OCI-LY7 (cell line): ENCODE measurements at regions of chr11 and their contacts with region 1.

Region 1: DNA sequence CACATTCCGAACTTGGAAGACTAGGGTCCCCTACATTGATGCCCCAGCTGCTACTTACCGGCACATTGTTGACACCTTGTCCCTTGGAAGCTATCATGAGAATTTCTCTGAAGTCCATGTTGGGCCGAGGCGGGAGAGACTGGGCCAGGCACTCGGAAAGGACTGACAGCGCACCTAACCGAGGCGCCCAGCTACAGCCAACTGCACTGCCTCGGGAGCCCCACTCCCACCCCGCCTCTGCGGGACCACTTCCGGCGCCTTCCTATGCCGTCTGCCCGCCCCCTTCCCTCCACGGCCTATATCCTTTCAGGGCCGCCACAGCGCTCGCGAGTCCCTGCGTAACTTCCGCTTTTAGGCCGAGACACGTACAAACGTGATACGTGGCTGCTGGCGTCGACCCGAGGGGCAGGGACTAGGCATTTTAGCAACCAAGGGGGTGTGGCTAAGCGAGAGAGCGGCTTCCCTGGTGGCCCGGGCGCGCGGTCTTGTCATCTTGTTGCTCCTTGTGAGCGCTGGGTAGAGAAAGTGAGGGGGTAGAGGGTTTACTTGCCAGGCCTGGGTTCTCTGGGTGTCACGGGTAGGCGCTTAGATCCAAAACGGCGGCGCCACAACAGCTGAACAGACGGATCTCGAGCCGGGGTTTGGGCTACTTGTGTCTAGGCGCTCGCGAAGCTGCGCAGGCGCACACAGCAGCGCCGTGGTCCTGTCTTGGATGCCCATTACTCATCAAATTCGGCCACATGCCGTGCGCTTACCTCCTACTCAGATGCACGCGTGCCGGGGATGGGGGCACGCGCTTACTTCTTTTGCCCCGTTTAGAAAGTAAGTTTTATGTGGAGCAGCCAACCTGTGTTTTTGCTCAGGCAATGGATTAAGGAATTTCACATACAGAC is at the start of gene SPTY2D1:
- DNase-seq: peak; percentile 100
- H3K4me3 ChIP-seq: peak within 1 kb of the TSS; percentile 90
- H3K27ac ChIP-seq: peak within 1 kb of the TSS; percentile 67
- H3K4me1 ChIP-seq: peaks cover 16% of the 10 kb centered on the region
- CTCF ChIP-seq: no peak
- total RNA-seq, gene SPTY2D1: 15.6 and 15.8 TPM in 2 replicates

Region 2: GRCh38 chr11:18567081-18567480 is 67.3 kb before region 1 on chr11:
- CTCF ChIA-PET with region 1: no interaction called
- POLR2A ChIA-PET with region 1: no interaction called
- intact Hi-C with region 1: no loop called
- DNase-seq: no peak
- H3K4me3 ChIP-seq: no peak overlapping the region
- H3K27ac ChIP-seq: no peak overlapping the region
- H3K4me1 ChIP-seq: no peaks in the 10 kb centered on the region
- CTCF ChIP-seq: no peak

Region 3: GRCh38 chr11:18614667-18615066 is 19.7 kb before region 1 on chr11:
- CTCF ChIA-PET with region 1: no interaction called
- POLR2A ChIA-PET with region 1: interaction called, 10 read pairs
- intact Hi-C with region 1: no loop called
- DNase-seq: no peak
- H3K4me3 ChIP-seq: no peak overlapping the region
- H3K27ac ChIP-seq: no peak overlapping the region
- H3K4me1 ChIP-seq: no peaks in the 10 kb centered on the region
- CTCF ChIP-seq: no peak

Region 4: GRCh38 chr11:18624161-18624560 is 10.2 kb before region 1 on chr11:
- CTCF ChIA-PET with region 1: interaction called, 3 read pairs
- POLR2A ChIA-PET with region 1: interaction called, 43 read pairs
- intact Hi-C with region 1: no loop called
- DNase-seq: no peak
- H3K4me3 ChIP-seq: no peak overlapping the region
- H3K27ac ChIP-seq: no peak overlapping the region
- H3K4me1 ChIP-seq: peaks cover 11% of the 10 kb centered on the region
- CTCF ChIP-seq: no peak